Left ventricle myocardium inferior (tissue), 1 donor: ENCODE measurements at regions of chr5 and their contacts with region 1.

Region 1: GRCh38 chr5:69093771-69094482 is at the start of gene SLC30A5:
- DNase-seq: peak; percentile 99
- H3K4me3 ChIP-seq: peak within 1 kb of the TSS; percentile 95
- H3K27ac ChIP-seq: peak within 1 kb of the TSS; percentile 97
- H3K4me1 ChIP-seq: peaks cover 41% of the 10 kb centered on the region
- H3K27me3 ChIP-seq: no peaks in the 10 kb centered on the region
- CTCF ChIP-seq: peak; percentile 93
- total RNA-seq, gene SLC30A5: 31.8 TPM

Region 2: DNA sequence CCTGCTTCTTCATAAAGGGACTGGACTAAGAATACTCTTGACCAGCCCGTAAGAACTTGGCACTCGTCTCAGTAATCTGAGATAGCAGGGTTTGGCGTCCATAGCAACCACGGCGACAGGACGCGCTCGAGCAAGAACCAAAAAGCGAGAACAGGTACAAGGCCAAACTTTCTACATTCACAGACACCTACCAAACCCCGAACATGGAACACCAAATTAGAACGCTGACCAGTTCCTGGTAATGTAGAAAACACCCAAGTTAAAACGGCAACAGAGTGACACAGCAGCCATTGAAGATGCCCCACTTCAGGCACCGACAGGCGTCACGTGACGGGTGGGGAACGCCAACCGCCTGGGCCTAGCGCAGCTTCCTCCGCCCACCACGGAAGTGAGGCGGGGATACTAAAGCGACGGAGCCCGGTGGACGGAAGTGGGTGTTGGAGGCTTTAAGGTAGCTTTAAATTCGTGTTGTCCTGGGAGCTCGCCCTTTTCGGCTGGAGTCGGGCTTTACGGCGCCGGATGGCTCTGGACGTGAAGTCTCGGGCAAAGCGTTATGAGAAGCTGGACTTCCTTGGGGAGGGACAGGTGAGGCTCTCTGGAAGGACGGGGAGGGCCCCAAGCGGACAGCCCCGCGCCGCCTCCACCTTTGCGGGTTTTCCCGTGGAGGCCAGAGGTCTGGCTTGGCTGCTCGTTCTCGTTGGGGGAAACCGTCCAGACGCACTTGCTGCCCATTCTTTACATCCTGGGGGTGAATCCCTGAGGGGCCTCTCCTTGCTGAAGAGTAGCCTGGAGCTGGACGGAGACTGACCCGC is 140.7 kb after region 1 on chr5 and contains the start of gene CDK7:
- intact Hi-C with region 1: loop called (anchors 10 kb)
- DNase-seq: peak; percentile 93
- H3K4me3 ChIP-seq: peak within 1 kb of the TSS; percentile 91
- H3K27ac ChIP-seq: peak within 1 kb of the TSS; percentile 90
- H3K4me1 ChIP-seq: peaks cover 31% of the 10 kb centered on the region
- H3K27me3 ChIP-seq: no peaks in the 10 kb centered on the region
- CTCF ChIP-seq: no peak
- total RNA-seq, gene CDK7: 10.5 TPM